HCT116 (cell line): ENCODE measurements at regions of chr10 and their contacts with region 1.

Region 1: GRCh38 chr10:124279882-124280281 is 138.8 kb downstream of the OAT start:
- DNase-seq: no peak
- ATAC-seq: 0 out of 2 replicates have a peak, but pooled peaks have one; percentile 3
- H3K4me3 ChIP-seq: no peak overlapping the region
- H3K27ac ChIP-seq: no peak overlapping the region
- H3K4me1 ChIP-seq: no peaks in the 10 kb centered on the region
- H3K27me3 ChIP-seq: no peaks in the 10 kb centered on the region
- CTCF ChIP-seq: no peak
- POLR2A ChIP-seq: no peak
- RAD21 ChIP-seq: no peak

Region 2: GRCh38 chr10:124043310-124044142 is 236.4 kb before region 1 on chr10:
- CTCF ChIA-PET with region 1: no interaction called
- POLR2A ChIA-PET with region 1: no interaction called
- RAD21 ChIA-PET with region 1: no interaction called
- intact Hi-C with region 1: no loop called
- DNase-seq: no peak
- ATAC-seq: 0 out of 2 replicates have a peak, but pooled peaks have one; percentile 20
- H3K4me3 ChIP-seq: no peak overlapping the region
- H3K27ac ChIP-seq: no peak overlapping the region
- H3K4me1 ChIP-seq: no peaks in the 10 kb centered on the region
- H3K27me3 ChIP-seq: no peaks in the 10 kb centered on the region
- CTCF ChIP-seq: no peak
- POLR2A ChIP-seq: no peak
- RAD21 ChIP-seq: no peak

Region 3: DNA sequence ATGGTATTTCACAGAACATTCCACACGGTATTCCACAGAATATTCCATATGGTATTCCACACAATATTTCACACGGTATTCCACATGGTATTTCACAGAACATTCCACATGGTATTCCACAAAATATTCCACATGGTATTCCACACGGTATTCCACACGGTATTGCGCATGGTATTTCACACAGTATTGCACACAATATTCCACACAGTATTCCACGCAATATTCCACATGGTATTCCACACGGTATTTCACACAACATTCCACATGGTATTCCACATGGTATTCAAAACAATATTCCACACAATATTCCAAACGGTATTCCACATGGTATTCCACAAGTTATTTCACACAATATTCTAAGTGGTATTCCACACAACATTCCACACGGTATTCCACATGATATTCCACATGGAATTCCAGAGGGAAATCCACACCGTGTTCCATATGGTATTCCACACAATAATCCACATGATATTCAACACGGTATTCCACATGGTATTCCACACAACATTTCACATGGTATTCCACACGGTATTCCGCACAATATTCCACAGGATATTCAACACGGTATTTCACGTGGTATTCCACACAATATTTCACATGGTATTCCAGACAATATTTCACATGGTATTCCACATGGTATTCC is 49.8 kb before region 1 on chr10:
- CTCF ChIA-PET with region 1: no interaction called
- POLR2A ChIA-PET with region 1: no interaction called
- RAD21 ChIA-PET with region 1: no interaction called
- intact Hi-C with region 1: loop called (anchors 2 kb)
- DNase-seq: no peak
- ATAC-seq: no peak
- H3K4me3 ChIP-seq: no peak overlapping the region
- H3K27ac ChIP-seq: no peak overlapping the region
- H3K4me1 ChIP-seq: no peaks in the 10 kb centered on the region
- H3K27me3 ChIP-seq: no peaks in the 10 kb centered on the region
- CTCF ChIP-seq: no peak
- POLR2A ChIP-seq: no peak
- RAD21 ChIP-seq: no peak

Region 4: GRCh38 chr10:124539935-124540641 is 260.2 kb after region 1 on chr10:
- CTCF ChIA-PET with region 1: no interaction called
- POLR2A ChIA-PET with region 1: no interaction called
- RAD21 ChIA-PET with region 1: no interaction called
- intact Hi-C with region 1: no loop called
- DNase-seq: no peak
- ATAC-seq: peak; percentile 83
- H3K4me3 ChIP-seq: no peak overlapping the region
- H3K27ac ChIP-seq: no peak overlapping the region
- H3K4me1 ChIP-seq: no peaks in the 10 kb centered on the region
- H3K27me3 ChIP-seq: no peaks in the 10 kb centered on the region
- CTCF ChIP-seq: peak; percentile 53 to 78 (median 60)
- POLR2A ChIP-seq: no peak
- RAD21 ChIP-seq: peak; percentile 86

Region 5: DNA sequence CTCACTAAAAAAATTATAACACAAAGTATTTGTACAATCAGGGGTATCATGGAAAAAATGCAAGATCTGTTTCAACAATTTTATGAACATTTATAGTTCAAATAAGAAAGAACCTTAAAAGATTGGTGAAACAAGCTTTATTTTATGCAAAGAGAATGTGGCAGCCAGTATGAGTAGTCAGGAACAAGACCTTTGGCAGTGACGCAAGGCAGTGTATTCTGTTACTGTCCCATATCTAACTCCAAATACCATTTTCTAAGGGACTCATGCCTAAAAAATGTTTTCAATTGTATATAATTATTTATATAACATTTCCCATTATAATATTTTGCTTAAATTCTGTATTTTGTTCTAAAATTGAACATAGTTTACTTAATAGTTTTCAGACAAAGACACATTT is 483.4 kb after region 1 on chr10:
- CTCF ChIA-PET with region 1: no interaction called
- POLR2A ChIA-PET with region 1: no interaction called
- RAD21 ChIA-PET with region 1: no interaction called
- intact Hi-C with region 1: no loop called
- DNase-seq: no peak
- ATAC-seq: no peak
- H3K4me3 ChIP-seq: no peak overlapping the region
- H3K27ac ChIP-seq: no peak overlapping the region
- H3K4me1 ChIP-seq: no peaks in the 10 kb centered on the region
- H3K27me3 ChIP-seq: no peaks in the 10 kb centered on the region
- CTCF ChIP-seq: no peak
- POLR2A ChIP-seq: no peak
- RAD21 ChIP-seq: no peak

Region 6: DNA sequence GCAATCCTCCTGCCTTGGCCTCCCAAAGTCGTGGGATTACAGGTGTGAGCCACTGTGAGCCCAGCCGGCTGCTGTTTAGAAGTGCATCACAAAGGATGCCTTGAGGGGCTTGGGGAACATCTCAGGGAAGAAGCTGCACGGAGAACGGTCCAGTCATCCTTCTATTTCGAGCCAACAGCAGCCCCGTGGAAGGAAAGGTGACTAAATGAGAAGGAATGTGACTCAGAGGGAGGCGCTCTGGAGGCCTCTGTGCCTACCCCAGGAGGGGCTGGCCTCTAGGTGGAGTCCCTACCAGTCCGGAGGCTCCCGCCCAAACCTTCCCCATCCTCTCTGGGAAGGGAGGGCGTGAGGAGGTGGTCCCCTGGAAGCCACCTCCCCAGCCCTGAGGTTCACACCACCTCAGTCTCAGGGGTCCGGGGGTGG is 804.3 kb after region 1 on chr10:
- CTCF ChIA-PET with region 1: no interaction called
- POLR2A ChIA-PET with region 1: no interaction called
- RAD21 ChIA-PET with region 1: no interaction called
- intact Hi-C with region 1: no loop called
- DNase-seq: peak; percentile 85
- ATAC-seq: peak; percentile 94
- H3K4me3 ChIP-seq: peak overlapping the region in 1 of 2 experiments; percentile 27; a peak in 2 of 4 replicates
- H3K27ac ChIP-seq: peak overlapping the region; percentile 62
- H3K4me1 ChIP-seq: peaks cover 49 to 73% of the 10 kb centered on the region in 2 experiments
- H3K27me3 ChIP-seq: no peaks in the 10 kb centered on the region
- CTCF ChIP-seq: peak in 2 of 3 experiments; percentile 49 to 60; a peak in 4 of 6 replicates
- POLR2A ChIP-seq: no peak
- RAD21 ChIP-seq: no peak